ENCODE measurements at regions of chr11 and their contacts with region 1.

Region 1: DNA sequence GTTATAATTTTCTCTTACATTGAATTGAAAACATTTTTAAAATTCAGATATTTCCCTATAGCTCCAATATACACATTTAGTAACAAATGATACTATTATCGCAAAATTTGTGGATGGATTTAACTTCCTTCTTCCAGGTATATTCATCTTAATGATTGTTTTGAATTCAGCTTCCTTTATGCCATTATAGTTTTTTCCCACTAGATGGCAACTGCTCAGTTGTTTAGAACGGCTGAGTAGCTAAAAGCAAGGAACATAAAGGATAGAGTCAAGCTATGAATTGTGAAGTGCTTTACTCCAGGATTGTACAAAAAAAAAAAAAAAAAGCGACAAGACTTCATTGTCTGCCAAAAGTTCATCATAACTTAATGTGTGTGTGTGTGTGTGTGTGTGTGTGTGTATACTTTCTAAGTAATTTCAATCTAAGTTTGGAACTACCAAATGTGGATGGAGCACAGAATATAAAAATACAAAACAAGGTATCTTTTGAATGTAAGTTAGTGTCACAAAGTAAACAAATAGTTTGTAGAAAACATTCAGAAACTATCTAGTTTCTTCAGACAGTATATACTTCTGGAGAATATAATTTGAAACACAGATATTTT is 846.4 kb downstream of the DLG2 start:
- DNase-seq: peak; percentile 74
- ATAC-seq: peak; percentile 71
- H3K4me3 ChIP-seq: no peak overlapping the region
- H3K27ac ChIP-seq: no peak overlapping the region
- H3K4me1 ChIP-seq: no peaks in the 10 kb centered on the region
- H3K27me3 ChIP-seq: peaks cover 22% of the 10 kb centered on the region; the same call in 1 of the 2 replicates
- CTCF ChIP-seq: peak; percentile 81

Region 2: DNA sequence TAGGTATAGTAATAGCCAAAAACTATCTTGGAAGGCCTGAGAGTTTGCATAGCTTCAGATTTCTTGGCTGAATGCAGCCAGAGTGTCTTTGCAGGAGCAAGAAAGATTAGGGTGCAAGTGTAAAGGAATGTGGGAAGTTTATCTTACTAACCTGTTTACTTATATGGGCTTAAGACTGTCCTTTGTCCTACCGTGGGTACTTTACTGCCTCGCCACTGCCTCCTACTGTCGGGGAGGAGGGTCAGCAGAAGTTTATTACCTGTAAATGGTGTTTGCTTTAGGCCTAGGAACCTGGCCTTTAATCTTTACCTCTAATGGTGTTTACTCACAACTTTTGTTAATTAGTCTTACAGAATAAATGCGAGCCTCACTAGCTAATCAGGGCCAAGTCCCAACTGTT is 212.6 kb after region 1 on chr11:
- CTCF ChIA-PET with region 1: no interaction called
- POLR2A ChIA-PET with region 1: no interaction called
- intact Hi-C with region 1: loop called (anchors 1 kb)
- DNase-seq: peak; percentile 63
- ATAC-seq: peak; percentile 76
- H3K4me3 ChIP-seq: no peak overlapping the region
- H3K27ac ChIP-seq: no peak overlapping the region
- H3K4me1 ChIP-seq: no peaks in the 10 kb centered on the region
- H3K27me3 ChIP-seq: no peaks in the 10 kb centered on the region
- CTCF ChIP-seq: peak; percentile 88